ENCODE measurements at regions of chr7 and their contacts with region 1.

Region 1: GRCh38 chr7:45259966-45260646 is 102.5 kb downstream of the RAMP3 start:
- DNase-seq: peak; percentile 79
- ATAC-seq: peak; percentile 97
- H3K4me3 Mint-ChIP-seq: no peak overlapping the region
- H3K27ac Mint-ChIP-seq: no peak overlapping the region
- H3K4me1 Mint-ChIP-seq: peaks cover 2% of the 10 kb centered on the region
- H3K27me3 Mint-ChIP-seq: peaks cover 15% of the 10 kb centered on the region
- CTCF ChIP-seq: peak; percentile 99

Region 2: DNA sequence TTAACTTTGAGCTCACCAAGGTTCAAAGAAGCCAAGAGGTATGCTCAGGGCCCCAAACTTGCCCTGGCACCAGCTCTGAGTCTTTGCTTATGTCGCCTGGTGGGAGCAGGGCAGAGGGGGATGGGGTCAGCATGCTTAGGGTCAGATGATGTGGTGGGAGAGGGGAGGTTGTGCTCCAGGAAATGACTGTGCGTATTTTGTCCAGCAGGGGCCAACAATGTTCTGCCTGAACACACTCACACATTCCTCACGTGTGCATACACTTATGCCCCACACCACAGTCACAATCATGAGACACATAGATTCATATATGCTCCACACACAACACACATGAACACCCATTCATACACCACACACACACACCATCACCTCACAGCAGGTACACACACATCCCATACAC is 106.9 kb before region 1 on chr7:
- CTCF ChIA-PET with region 1: interaction called, 72 read pairs
- POLR2A ChIA-PET with region 1: interaction called, 3 read pairs
- intact Hi-C with region 1: loop called (anchors 1 kb)
- DNase-seq: no peak
- ATAC-seq: no peak
- H3K4me3 Mint-ChIP-seq: no peak overlapping the region
- H3K27ac Mint-ChIP-seq: no peak overlapping the region
- H3K4me1 Mint-ChIP-seq: no peaks in the 10 kb centered on the region
- H3K27me3 Mint-ChIP-seq: peaks cover 19% of the 10 kb centered on the region
- CTCF ChIP-seq: no peak

Region 3: DNA sequence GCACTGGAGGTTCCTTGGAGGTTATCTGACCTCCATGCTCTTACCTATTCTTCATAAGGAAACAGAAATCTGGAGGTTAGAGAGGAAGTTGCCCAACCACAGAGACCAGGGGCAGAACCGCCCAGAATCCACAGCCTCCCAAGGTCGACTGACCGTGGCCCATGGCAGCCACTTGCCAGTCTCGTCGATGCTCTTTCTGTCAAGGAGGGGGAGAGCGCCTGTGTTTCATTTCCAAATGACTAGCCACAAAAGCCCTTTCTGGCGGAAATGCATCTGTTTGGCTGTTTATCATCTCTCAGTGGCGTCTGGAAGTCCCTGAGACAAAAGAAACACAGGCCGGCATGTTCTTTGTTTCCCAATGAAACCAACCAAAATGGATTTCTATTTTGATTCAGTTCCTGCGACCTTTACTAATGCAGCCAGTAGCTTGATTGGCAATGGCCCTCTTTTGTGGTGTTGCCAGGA is 99.7 kb before region 1 on chr7:
- CTCF ChIA-PET with region 1: interaction called, 72 read pairs
- POLR2A ChIA-PET with region 1: no interaction called
- intact Hi-C with region 1: no loop called
- DNase-seq: no peak
- ATAC-seq: peak; percentile 24
- H3K4me3 Mint-ChIP-seq: no peak overlapping the region
- H3K27ac Mint-ChIP-seq: no peak overlapping the region
- H3K4me1 Mint-ChIP-seq: peaks cover 2% of the 10 kb centered on the region
- H3K27me3 Mint-ChIP-seq: peaks cover 23% of the 10 kb centered on the region
- CTCF ChIP-seq: no peak

Region 4: DNA sequence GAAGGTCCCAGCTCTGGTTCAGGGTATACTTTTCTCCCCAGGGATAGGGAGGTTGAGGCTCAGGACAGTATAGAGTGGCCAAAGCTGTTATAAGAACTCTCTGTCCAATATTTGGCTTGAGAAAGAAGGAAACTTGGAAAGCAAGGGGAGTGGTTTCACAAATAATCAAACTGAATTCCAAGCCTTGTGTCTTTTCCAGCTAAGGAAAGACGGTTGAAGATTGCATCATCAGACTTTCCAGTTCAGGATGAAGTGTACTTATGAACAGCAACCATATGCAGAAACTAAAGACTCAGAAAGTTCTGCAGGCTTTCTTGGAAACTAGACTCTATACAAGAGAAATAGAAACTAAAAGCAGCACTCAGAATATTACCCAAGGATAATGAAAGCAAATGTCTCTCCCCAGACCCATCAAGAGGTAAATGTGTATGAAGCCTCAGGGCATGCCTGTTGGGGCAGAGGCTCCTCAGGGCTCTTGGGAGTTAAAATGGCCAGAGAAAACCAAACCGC is 56.1 kb before region 1 on chr7:
- CTCF ChIA-PET with region 1: interaction called, 18 read pairs
- POLR2A ChIA-PET with region 1: no interaction called
- intact Hi-C with region 1: no loop called
- DNase-seq: no peak
- ATAC-seq: peak; percentile 95
- H3K4me3 Mint-ChIP-seq: peak overlapping the region; percentile 6
- H3K27ac Mint-ChIP-seq: peak overlapping the region; percentile 74
- H3K4me1 Mint-ChIP-seq: peaks cover 36% of the 10 kb centered on the region
- H3K27me3 Mint-ChIP-seq: peaks cover 21% of the 10 kb centered on the region
- CTCF ChIP-seq: no peak

Region 5: GRCh38 chr7:45278763-45279398 is 18.8 kb after region 1 on chr7:
- CTCF ChIA-PET with region 1: interaction called, 14 read pairs
- POLR2A ChIA-PET with region 1: interaction called, 5 read pairs
- intact Hi-C with region 1: no loop called
- DNase-seq: no peak
- ATAC-seq: no peak
- H3K4me3 Mint-ChIP-seq: no peak overlapping the region
- H3K27ac Mint-ChIP-seq: no peak overlapping the region
- H3K4me1 Mint-ChIP-seq: no peaks in the 10 kb centered on the region
- H3K27me3 Mint-ChIP-seq: peaks cover 19% of the 10 kb centered on the region
- CTCF ChIP-seq: no peak

Measured in activated CD8-positive, alpha-beta T cell treated with anti-CD3 and anti-CD28 coated beads for 36 hours (primary cell).